ENCODE measurements at regions of chr20 and their contacts with region 1.

Region 1: GRCh38 chr20:53708129-53708968 is 114.7 kb upstream of the ZNF217 start:
- DNase-seq: peak in 7 of 9 donors; percentile 15 to 52 (median 18)
- ATAC-seq: peak; percentile 62
- H3K4me3 ChIP-seq: no peak overlapping the region
- H3K4me3 Mint-ChIP-seq: peak overlapping the region; percentile 61 to 88 (median 77)
- H3K27ac ChIP-seq: peak overlapping the region; percentile 58
- H3K27ac Mint-ChIP-seq: peak overlapping the region; percentile 91 to 100 (median 96)
- H3K4me1 ChIP-seq: peaks cover 22 to 42% of the 10 kb centered on the region in 2 donors
- H3K4me1 Mint-ChIP-seq: peaks cover 29 to 59% (median 57%) of the 10 kb centered on the region in 7 donors
- H3K27me3 ChIP-seq: no peaks in the 10 kb centered on the region
- H3K27me3 Mint-ChIP-seq: no peaks in the 10 kb centered on the region

Region 2: GRCh38 chr20:53070706-53071392 is 637.5 kb before region 1 on chr20:
- CTCF ChIA-PET with region 1: no interaction called
- POLR2A ChIA-PET with region 1: no interaction called
- intact Hi-C with region 1: loop called in 1 of 2 experiments (anchors 5 kb)
- DNase-seq: peak in 4 of 9 donors; percentile 18 to 40 (median 37)
- ATAC-seq: peak; percentile 54
- H3K4me3 ChIP-seq: no peak overlapping the region
- H3K4me3 Mint-ChIP-seq: peak overlapping the region in 7 of 10 donors; percentile 9 to 61 (median 24)
- H3K27ac ChIP-seq: peak overlapping the region; percentile 4
- H3K27ac Mint-ChIP-seq: peak overlapping the region; percentile 44 to 94 (median 73)
- H3K4me1 ChIP-seq: peaks cover 0 to 13% of the 10 kb centered on the region in 2 donors
- H3K4me1 Mint-ChIP-seq: peaks cover 22 to 52% (median 44%) of the 10 kb centered on the region in 7 donors
- H3K27me3 ChIP-seq: no peaks in the 10 kb centered on the region
- H3K27me3 Mint-ChIP-seq: peaks cover 0 to 9% (median 0%) of the 10 kb centered on the region in 5 donors

Region 3: DNA sequence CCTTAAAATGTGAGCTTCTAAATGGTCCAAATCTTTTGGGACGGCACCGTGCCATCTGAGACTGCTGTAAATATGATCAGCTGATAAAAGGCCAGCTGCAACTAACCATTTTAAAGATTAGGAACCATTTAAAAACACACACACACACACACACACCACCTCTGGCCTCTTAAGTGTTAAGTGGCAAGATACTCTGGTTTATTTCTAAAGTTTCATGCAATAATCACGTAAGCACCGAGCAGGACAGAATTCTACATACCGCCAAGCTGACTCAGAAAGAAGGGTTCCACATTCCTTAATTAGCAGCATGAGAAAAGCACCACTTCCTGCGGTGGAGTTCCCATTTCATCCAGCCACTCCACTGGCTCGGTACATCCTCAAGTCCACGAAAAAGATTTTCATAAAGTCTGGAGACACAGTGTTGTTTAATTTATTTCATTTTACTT is 96.9 kb before region 1 on chr20:
- CTCF ChIA-PET with region 1: no interaction called
- POLR2A ChIA-PET with region 1: interaction called, 8 read pairs
- intact Hi-C with region 1: loop called in 1 of 2 experiments (anchors 1 kb)
- DNase-seq: peak in 1 of 9 donors; percentile 15
- ATAC-seq: no peak
- H3K4me3 ChIP-seq: no peak overlapping the region
- H3K4me3 Mint-ChIP-seq: no peak overlapping the region
- H3K27ac ChIP-seq: peak overlapping the region; percentile 35
- H3K27ac Mint-ChIP-seq: peak overlapping the region in 8 of 9 donors; percentile 48 to 81 (median 76)
- H3K4me1 ChIP-seq: peaks cover 12 to 22% of the 10 kb centered on the region in 2 donors
- H3K4me1 Mint-ChIP-seq: peaks cover 10 to 46% (median 37%) of the 10 kb centered on the region in 7 donors
- H3K27me3 ChIP-seq: no peaks in the 10 kb centered on the region
- H3K27me3 Mint-ChIP-seq: no peaks in the 10 kb centered on the region

Region 4: DNA sequence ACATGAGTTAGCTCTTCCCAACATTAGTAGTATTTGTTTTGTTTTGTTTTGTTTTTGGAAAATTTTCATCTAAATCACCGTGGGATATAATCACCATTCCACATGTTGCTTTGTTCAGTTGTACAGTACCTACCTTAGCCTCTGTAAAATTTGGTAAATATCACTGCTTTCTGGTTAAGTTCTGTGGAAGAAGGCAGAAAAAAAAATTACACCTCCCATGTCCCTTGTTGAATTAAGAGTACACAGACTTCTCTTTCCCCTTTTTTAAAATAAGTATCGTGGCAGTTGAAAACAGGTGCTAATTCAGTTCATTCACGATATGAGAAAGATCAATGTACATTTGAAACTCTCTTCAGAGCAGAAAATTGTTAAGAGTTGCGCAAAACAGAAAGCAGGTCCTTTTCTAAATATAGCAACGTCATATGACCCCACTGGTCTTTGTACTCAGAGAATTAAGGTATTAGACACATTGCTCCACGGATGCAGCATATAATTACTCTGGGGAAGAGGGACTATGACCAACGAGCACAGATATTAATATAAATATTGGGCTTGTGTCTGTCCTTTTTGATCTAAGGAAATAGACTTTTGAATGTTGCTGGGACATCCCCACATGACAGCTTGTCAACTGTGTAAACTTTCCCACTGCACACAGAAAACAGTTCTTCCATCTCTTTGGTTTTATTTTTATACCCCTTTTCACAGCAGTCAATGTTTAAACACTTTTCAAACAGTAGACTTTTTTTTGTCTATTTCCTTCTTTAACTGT is 56.1 kb before region 1 on chr20:
- CTCF ChIA-PET with region 1: interaction called, 3 read pairs
- POLR2A ChIA-PET with region 1: interaction called, 3 read pairs
- intact Hi-C with region 1: loop called in 1 of 2 experiments (anchors 1 kb)
- DNase-seq: peak in 7 of 9 donors; percentile 34 to 61 (median 46)
- ATAC-seq: peak; percentile 85
- H3K4me3 ChIP-seq: peak overlapping the region; percentile 22
- H3K4me3 Mint-ChIP-seq: peak overlapping the region; percentile 25 to 86 (median 73)
- H3K27ac ChIP-seq: peak overlapping the region; percentile 72
- H3K27ac Mint-ChIP-seq: peak overlapping the region; percentile 88 to 97 (median 95)
- H3K4me1 ChIP-seq: peaks cover 21 to 32% of the 10 kb centered on the region in 2 donors
- H3K4me1 Mint-ChIP-seq: peaks cover 23 to 50% (median 43%) of the 10 kb centered on the region in 7 donors
- H3K27me3 ChIP-seq: no peaks in the 10 kb centered on the region
- H3K27me3 Mint-ChIP-seq: no peaks in the 10 kb centered on the region

Region 5: DNA sequence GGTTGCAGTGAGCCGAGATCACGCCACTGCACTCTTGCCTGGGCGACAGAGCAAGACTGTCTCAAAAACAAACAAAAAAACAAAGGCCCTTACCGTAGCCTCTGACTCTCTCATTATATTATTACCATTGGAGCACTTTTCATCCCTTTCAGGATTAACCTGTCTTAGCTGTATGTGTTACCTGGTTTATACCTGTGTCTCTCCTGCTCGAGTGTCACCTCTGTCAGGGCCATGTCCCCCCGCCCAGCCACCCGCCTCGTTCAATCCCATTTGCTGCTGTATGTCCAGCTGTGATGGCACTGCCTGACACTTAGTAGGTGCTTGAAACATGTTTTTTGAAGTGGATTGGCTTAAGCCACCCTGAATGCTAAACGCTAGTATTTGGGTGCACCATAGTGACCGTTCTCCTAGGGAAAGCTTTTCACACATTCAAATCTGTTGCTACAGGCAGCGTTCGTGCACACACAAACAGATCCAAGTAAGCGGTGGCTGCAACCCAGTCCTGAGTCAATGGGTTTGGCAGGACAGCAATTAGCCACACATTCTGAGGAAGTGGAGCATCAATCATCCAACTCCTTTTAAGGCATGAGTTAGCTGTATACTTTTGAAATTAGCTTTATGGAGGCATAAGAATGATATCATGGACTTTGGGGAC is 15.8 kb before region 1 on chr20:
- CTCF ChIA-PET with region 1: interaction called, 5 read pairs
- POLR2A ChIA-PET with region 1: interaction called, 6 read pairs
- intact Hi-C with region 1: loop called in 1 of 2 experiments (anchors 1 kb)
- DNase-seq: no peak
- ATAC-seq: peak; percentile 61
- H3K4me3 ChIP-seq: no peak overlapping the region
- H3K4me3 Mint-ChIP-seq: peak overlapping the region; percentile 42 to 80 (median 72)
- H3K27ac ChIP-seq: no peak overlapping the region
- H3K27ac Mint-ChIP-seq: peak overlapping the region; percentile 38 to 92 (median 69)
- H3K4me1 ChIP-seq: peaks cover 8 to 10% of the 10 kb centered on the region in 2 donors
- H3K4me1 Mint-ChIP-seq: peaks cover 8 to 45% (median 30%) of the 10 kb centered on the region in 7 donors
- H3K27me3 ChIP-seq: no peaks in the 10 kb centered on the region
- H3K27me3 Mint-ChIP-seq: no peaks in the 10 kb centered on the region

Region 6: DNA sequence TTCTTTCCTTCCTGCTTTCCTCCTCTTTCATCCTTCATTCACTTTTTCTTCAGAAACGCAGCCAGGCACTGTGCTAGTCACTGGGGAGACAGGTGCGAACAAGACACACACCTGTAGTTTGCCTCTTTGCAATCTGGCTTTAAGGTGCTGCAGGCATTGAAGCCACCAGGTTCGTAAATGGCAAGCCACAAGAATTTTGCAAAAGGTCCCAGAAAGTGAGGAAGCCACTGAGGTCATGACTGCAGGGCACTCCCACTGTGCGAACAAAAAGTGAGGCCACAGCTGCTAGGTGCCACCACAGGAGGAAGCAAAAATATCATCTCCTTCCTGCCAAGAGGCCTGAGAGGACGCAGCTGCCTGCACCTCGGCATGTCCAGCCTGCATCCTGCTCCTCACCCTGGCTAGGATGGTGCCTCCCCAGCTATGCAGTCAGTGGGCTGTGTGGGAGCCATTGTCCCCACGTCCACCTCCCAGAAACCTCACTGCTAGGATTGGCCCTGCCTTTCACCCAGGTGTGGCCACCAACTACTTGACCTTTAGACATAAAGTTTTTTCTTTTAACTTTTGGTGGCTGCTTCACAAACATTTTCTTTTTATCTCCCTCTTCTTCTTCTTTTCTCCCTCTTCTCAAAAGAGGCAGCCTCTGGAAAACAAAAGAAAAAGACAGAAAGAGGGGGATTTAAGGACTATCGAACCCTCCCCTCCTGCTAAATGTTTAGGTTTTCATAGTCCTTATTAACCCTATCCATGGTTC is 131.3 kb after region 1 on chr20:
- CTCF ChIA-PET with region 1: interaction called, 5 read pairs
- POLR2A ChIA-PET with region 1: no interaction called
- intact Hi-C with region 1: loop called in 1 of 2 experiments (anchors 5 kb)
- DNase-seq: peak; percentile 18 to 81 (median 68)
- ATAC-seq: peak; percentile 79
- H3K4me3 ChIP-seq: no peak overlapping the region
- H3K4me3 Mint-ChIP-seq: peak overlapping the region; percentile 48 to 95 (median 82)
- H3K27ac ChIP-seq: peak overlapping the region; percentile 65
- H3K27ac Mint-ChIP-seq: peak overlapping the region; percentile 93 to 100 (median 97)
- H3K4me1 ChIP-seq: peaks cover 64 to 68% of the 10 kb centered on the region in 2 donors
- H3K4me1 Mint-ChIP-seq: peaks cover 44 to 83% (median 71%) of the 10 kb centered on the region in 7 donors
- H3K27me3 ChIP-seq: no peaks in the 10 kb centered on the region
- H3K27me3 Mint-ChIP-seq: no peaks in the 10 kb centered on the region

Region 7: DNA sequence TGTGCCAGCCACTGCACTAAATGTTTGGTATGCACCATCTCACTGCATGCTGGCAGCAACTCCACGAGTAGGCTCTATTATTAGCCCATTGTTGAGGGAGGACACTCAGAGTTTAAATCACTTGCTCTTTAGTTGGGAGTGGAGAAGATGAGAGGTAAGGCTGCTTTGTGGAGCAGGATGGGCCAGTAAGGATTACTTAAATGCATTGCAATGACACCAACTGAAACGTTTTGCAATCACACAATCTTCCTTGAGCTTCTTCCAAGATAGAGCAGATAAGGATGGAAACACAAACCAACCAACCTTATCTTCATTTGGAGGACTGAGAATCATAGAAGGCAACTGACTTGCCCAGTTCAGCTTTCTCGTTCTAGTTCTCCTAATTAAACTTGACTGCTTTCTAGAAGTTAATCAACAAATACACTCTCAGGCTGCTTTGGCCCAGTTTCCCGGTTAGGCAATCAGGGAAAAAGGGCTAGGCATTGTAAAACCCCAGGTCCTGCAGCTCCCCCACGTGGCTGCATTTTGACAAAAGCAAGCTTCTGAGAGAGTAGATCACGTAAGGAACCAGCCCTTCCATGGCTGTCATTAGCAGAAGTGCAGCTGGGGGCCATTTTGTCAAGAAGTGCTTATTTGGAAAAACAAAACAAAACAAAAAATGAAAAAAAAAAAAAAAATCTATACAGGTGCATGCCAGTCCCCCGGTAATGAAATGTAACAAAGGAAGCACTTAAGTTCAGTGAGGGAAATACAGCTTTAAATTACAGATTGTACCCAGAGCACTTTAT is 231.4 kb after region 1 on chr20:
- CTCF ChIA-PET with region 1: interaction called, 6 read pairs
- POLR2A ChIA-PET with region 1: interaction called, 3 read pairs
- intact Hi-C with region 1: loop called in 1 of 2 experiments (anchors 2 kb)
- DNase-seq: peak; percentile 35 to 62 (median 48)
- ATAC-seq: peak; percentile 82
- H3K4me3 ChIP-seq: no peak overlapping the region
- H3K4me3 Mint-ChIP-seq: peak overlapping the region in 3 of 10 donors; percentile 24 to 44 (median 30)
- H3K27ac ChIP-seq: no peak overlapping the region
- H3K27ac Mint-ChIP-seq: peak overlapping the region in 6 of 9 donors; percentile 2 to 79 (median 22)
- H3K4me1 ChIP-seq: peaks cover 15 to 24% of the 10 kb centered on the region in 2 donors
- H3K4me1 Mint-ChIP-seq: peaks cover 26 to 62% (median 44%) of the 10 kb centered on the region in 7 donors
- H3K27me3 ChIP-seq: no peaks in the 10 kb centered on the region
- H3K27me3 Mint-ChIP-seq: no peaks in the 10 kb centered on the region

Measured in naive thymus-derived CD4-positive, alpha-beta T cell (primary cell).